PC-3 (cell line): ENCODE measurements at regions of chr10 and their contacts with region 1.

Region 1: DNA sequence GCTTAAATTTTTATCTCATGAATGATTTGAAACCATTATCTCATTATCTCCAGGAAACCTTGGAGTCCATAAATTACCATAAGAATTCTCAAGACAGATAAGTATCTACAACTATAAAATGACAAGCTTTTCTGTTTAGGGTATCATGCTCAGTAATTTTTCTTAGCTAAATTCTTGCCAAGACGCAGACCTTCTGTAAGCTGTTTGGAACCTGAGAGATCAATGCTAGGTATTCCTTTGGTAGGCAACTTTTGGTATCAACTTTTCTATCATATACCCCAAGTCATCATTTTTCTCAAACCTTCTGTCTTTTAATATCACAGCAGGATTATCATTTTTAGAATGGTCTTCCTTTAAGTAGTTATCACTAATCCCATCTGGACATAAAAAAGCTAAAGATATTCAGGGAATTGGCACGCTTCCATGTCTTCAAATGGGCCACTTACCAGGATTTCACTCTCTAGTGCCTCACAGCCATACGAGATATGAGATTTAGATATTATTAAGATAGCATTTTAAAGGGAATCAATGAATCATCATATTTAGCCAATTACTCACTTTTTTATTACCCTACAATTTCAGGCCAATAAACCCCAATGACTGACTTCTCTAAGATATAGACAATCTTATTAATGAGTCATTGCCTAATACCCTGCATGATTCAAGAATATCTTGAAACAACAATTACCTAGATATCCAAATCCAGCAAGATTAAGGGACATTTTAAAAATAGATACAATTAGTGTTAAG is 544.1 kb downstream of the HTR7 start:
- DNase-seq: peak; percentile 90
- ATAC-seq: peak; percentile 80
- H3K4me3 ChIP-seq: peak overlapping the region; percentile 24; the same call in 1 of the 2 replicates
- H3K27ac ChIP-seq: peak overlapping the region; percentile 79
- H3K4me1 ChIP-seq: peaks cover 34% of the 10 kb centered on the region
- H3K27me3 ChIP-seq: no peaks in the 10 kb centered on the region
- CTCF ChIP-seq: no peak

Region 2: GRCh38 chr10:90227217-90227656 is 86.5 kb before region 1 on chr10:
- CTCF ChIA-PET with region 1: no interaction called
- POLR2A ChIA-PET with region 1: no interaction called
- intact Hi-C with region 1: loop called (anchors 5 kb)
- DNase-seq: peak; percentile 93
- ATAC-seq: peak; percentile 85
- H3K4me3 ChIP-seq: no peak overlapping the region
- H3K27ac ChIP-seq: peak overlapping the region; percentile 96
- H3K4me1 ChIP-seq: peaks cover 37% of the 10 kb centered on the region
- H3K27me3 ChIP-seq: no peaks in the 10 kb centered on the region
- CTCF ChIP-seq: no peak

Region 3: DNA sequence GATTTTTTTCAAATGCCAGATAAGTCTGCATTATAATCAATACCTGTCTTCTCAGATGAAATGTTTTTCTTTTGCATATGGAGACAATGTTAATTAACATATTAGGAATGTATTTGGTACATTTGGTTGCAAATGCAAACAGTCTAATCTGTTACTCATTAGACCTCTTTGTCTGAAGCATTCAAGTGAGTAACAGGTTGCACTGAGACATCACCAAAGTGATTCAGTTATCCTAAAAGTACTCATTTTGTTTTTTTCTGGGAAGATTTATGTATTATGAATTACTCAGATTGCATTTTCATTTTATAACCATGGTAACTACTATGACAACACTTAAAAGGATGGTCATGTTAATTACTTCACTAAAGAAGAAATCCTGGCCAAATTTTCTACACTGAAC is 30.5 kb after region 1 on chr10:
- CTCF ChIA-PET with region 1: no interaction called
- POLR2A ChIA-PET with region 1: no interaction called
- intact Hi-C with region 1: loop called (anchors 1 kb)
- DNase-seq: peak; percentile 22
- ATAC-seq: no peak; the same call in 1 of the 2 replicates
- H3K4me3 ChIP-seq: no peak overlapping the region
- H3K27ac ChIP-seq: no peak overlapping the region
- H3K4me1 ChIP-seq: peaks cover 18% of the 10 kb centered on the region
- H3K27me3 ChIP-seq: no peaks in the 10 kb centered on the region
- CTCF ChIP-seq: no peak

Region 4: DNA sequence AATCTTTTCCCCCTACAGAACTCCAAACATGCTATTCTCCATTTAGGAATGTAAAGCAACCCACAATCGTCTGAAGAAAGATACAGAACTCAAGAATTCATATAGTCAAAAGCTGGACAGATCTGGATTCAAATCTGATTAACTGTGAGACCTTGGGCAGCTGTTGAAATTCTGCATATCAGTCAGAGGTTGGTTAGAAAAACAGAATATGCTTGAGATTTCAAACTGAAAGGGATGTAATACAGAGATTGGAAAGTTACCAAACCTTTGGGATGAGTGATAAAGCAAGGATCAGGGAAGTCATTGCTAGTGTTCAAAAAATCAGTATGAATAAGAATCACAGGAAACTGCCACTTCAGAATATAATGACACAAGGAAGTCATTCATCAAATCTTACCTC is 137.5 kb after region 1 on chr10:
- CTCF ChIA-PET with region 1: no interaction called
- POLR2A ChIA-PET with region 1: interaction called, 4 read pairs
- intact Hi-C with region 1: loop called (anchors 1 kb)
- DNase-seq: peak; percentile 45
- ATAC-seq: peak; percentile 34
- H3K4me3 ChIP-seq: no peak overlapping the region
- H3K27ac ChIP-seq: peak overlapping the region; percentile 67
- H3K4me1 ChIP-seq: peaks cover 45% of the 10 kb centered on the region
- H3K27me3 ChIP-seq: no peaks in the 10 kb centered on the region
- CTCF ChIP-seq: no peak